ENCODE measurements at regions of chr1 and their contacts with region 1.

Region 1: GRCh38 chr1:222713091-222713961 is 962 bp downstream of the BROX start:
- DNase-seq: peak; percentile 91
- H3K4me3 Mint-ChIP-seq: peak overlapping the region; percentile 100
- H3K27ac Mint-ChIP-seq: peak overlapping the region; percentile 98
- H3K4me1 Mint-ChIP-seq: peaks cover 37% of the 10 kb centered on the region
- H3K27me3 Mint-ChIP-seq: no peaks in the 10 kb centered on the region

Region 2: DNA sequence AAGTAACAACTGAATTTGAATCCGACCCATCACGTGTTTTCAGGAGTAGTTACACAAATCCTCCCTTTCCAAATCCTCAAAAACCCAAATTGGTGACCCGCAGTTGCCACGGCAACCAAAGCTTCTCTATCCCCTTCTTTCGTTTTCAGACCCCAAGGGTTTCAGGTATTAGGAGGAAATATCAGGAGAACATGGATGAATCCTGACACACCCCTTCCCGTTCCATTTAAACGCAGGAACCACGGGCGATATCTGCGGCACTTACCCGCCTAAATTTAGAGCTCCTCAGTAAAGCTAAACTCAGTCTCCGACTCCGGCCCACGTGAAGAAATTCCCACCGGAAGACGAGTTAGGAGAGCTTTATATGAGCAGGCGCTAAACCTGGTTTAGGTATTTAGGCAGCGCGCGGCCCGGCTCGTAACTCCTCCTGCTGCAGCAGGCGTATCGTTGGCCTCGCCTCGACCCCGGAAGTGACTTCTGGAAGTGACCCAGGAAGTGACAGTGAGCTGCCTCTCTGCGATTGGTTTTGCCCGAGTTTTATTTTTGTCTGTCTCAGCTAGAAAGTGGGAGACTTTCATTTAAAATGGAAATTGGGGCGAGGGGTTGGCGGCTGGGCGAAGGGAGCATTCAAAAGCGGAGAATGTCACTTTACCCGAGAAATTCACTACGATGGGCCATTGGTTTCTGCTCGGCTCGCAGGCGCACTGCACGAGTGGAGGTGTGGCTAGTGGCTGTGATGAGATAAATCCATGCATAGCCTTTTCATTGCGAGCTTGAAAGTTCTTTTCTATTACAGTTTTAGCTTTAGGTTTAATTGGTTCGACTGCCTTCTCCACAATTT is 123.6 kb before region 1 on chr1 and contains the start of gene TAF1A:
- CTCF ChIA-PET with region 1: interaction called, 3 read pairs
- intact Hi-C with region 1: loop called (anchors 1 kb)
- DNase-seq: peak; percentile 93
- H3K4me3 Mint-ChIP-seq: peak within 1 kb of the TSS; percentile 99
- H3K27ac Mint-ChIP-seq: peak within 1 kb of the TSS; percentile 97
- H3K4me1 Mint-ChIP-seq: peaks cover 47% of the 10 kb centered on the region
- H3K27me3 Mint-ChIP-seq: no peaks in the 10 kb centered on the region
- total RNA-seq, gene TAF1A: 19.5 to 20.5 TPM

Region 3: GRCh38 chr1:222617367-222617951 is 95.9 kb before region 1 on chr1:
- CTCF ChIA-PET with region 1: no interaction called
- intact Hi-C with region 1: loop called (anchors 1 kb)
- DNase-seq: peak; percentile 92
- H3K4me3 Mint-ChIP-seq: peak overlapping the region; percentile 79
- H3K27ac Mint-ChIP-seq: peak overlapping the region; percentile 54
- H3K4me1 Mint-ChIP-seq: peaks cover 32% of the 10 kb centered on the region
- H3K27me3 Mint-ChIP-seq: peaks cover 3% of the 10 kb centered on the region

Region 4: DNA sequence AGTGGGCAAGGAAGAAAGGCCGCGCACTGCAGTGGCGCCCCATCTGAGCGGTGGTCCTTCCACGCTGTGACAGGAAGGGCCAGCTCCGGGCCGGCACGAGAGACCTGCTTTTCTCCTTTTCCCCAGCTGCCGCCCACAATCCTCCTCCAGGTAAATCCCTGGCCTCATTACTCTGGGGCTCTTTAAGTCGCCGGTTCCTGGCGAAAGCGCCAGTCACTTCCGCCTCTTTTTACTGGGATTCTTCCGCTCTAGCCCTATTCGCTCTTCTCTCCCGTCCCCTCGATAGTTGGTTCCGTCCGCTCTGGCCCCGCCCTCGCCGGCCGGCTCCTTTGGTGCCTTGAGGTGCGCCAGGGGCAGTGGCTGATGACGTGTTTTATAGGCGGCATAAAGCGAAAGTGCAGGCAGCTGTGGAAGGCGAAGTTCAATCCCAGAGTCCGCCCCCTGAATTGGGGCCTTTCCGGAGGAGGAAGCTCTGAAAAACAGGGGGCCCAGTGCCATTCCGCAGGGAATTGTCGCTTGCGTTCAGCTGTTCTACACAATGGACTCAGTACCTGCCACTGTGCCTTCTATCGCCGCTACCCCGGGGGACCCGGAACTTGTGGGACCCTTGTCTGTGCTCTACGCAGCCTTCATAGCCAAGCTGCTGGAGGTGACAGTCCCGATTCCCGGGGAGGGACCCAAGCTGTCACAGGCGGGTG is 69.2 kb before region 1 on chr1:
- CTCF ChIA-PET with region 1: interaction called, 4 read pairs
- intact Hi-C with region 1: loop called (anchors 1 kb)
- DNase-seq: peak; percentile 99
- H3K4me3 Mint-ChIP-seq: peak overlapping the region; percentile 99
- H3K27ac Mint-ChIP-seq: peak overlapping the region; percentile 92
- H3K4me1 Mint-ChIP-seq: peaks cover 32% of the 10 kb centered on the region
- H3K27me3 Mint-ChIP-seq: no peaks in the 10 kb centered on the region

Region 5: DNA sequence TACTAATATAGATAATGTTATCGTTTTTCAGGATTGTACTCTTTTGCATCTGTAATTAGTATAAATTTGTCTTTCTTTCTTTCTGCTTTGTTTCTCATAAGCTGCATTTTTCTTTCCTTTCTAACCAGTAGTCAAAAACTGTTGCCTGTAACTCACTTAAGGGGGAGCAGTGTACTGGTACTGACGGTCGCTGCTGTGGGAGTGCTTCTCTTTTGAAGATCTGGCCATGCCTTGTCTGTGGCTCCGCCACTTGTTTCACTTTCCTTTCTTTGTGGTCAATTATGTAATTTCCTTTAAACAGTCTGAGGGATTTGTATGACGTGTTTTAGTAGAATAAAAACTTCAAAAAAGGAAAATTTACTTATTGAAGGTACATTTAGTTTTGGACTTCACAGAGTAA is 58.5 kb before region 1 on chr1:
- CTCF ChIA-PET with region 1: interaction called, 3 read pairs
- intact Hi-C with region 1: loop called (anchors 1 kb)
- DNase-seq: peak; percentile 81
- H3K4me3 Mint-ChIP-seq: peak overlapping the region; percentile 44
- H3K27ac Mint-ChIP-seq: peak overlapping the region; percentile 90
- H3K4me1 Mint-ChIP-seq: peaks cover 62% of the 10 kb centered on the region
- H3K27me3 Mint-ChIP-seq: no peaks in the 10 kb centered on the region

Region 6: DNA sequence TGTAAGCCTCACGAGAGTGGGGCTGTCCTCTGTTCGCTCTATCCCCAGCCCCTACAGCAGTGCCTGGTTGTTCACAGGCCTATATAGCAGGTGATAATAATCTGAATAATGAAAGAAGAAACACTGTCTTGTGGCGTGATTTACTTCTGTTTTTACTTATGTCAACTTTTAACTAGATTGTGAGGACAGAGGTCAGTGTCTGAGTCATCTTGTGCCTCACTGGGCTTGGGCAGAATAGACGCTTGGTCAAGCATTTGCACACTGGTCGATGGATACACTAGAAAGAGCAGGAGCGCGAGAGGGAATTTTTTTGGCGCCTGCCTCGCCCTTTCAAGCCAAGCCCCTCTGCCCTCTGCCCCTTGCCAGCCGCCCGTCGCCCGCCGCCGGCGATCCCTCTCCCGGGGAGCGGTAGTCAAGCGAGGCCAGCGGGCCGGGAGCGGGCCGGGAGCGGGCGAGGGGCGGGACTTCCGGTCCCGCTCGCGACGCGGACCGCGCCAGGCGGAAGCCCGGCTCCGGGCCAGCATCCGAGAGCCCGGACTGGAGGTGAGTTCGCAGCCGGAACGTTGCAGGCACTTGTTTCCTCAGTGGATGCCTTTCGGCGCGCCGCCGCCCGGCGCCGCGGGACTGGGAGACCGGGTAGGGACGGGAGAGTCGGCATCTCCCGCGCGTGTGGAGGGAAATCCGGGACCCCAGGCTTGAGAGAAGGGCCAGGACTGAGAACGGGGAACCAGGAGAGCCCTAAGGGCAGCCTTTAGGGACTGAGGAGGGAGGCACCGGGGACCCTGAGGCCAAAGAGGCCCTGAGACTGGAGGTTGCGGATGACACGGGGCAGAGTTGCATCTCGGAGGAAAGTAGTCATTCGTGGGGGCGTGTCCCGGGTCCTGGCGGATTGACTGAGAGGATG is 101.5 kb after region 1 on chr1 and contains the start of gene DISP1:
- CTCF ChIA-PET with region 1: no interaction called
- intact Hi-C with region 1: loop called (anchors 1 kb)
- DNase-seq: peak; percentile 85
- H3K4me3 Mint-ChIP-seq: peak within 1 kb of the TSS; percentile 88
- H3K27ac Mint-ChIP-seq: peak within 1 kb of the TSS; percentile 82
- H3K4me1 Mint-ChIP-seq: peaks cover 21% of the 10 kb centered on the region
- H3K27me3 Mint-ChIP-seq: no peaks in the 10 kb centered on the region
- total RNA-seq, gene DISP1: 0.93 to 0.94 TPM

Region 7: DNA sequence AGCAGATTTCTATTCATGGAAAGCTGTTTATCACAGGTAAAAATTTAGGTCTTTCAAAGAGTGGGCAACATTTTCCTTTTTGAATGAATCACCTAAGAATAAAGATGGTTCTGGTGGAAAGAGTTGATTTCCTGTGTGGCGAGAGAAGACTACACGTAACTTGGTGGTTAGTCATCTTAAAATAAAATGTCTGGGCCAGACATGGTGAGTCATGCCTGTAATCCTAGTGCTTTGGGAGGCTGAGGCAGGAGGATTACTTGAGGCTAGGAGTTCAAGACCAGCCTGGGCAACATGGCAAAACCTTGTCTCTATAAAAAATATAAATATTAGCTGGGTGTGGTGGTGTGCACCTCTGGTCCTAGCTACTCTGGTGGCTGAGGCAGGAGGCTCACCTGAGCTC is 167.3 kb after region 1 on chr1:
- CTCF ChIA-PET with region 1: no interaction called
- intact Hi-C with region 1: loop called (anchors 5 kb)
- DNase-seq: peak; percentile 52
- H3K4me3 Mint-ChIP-seq: no peak overlapping the region
- H3K27ac Mint-ChIP-seq: peak overlapping the region; percentile 53
- H3K4me1 Mint-ChIP-seq: peaks cover 23% of the 10 kb centered on the region
- H3K27me3 Mint-ChIP-seq: no peaks in the 10 kb centered on the region